Sigmoid colon (tissue), 7 donors: ENCODE measurements at regions of chr14 and their contacts with region 1.

Region 1: GRCh38 chr14:52043690-52044089 is 25.2 kb downstream of the NID2 start:
- DNase-seq: no peak
- H3K4me3 ChIP-seq: no peak overlapping the region
- H3K27ac ChIP-seq: peak overlapping the region in 1 of 4 donors; percentile 85
- H3K4me1 ChIP-seq: peaks cover 0 to 66% (median 62%) of the 10 kb centered on the region in 4 donors
- H3K27me3 ChIP-seq: no peaks in the 10 kb centered on the region
- CTCF ChIP-seq: peak in 1 of 4 experiments; percentile 21
- EP300 ChIP-seq: no peak
- POLR2A ChIP-seq: no peak

Region 2: DNA sequence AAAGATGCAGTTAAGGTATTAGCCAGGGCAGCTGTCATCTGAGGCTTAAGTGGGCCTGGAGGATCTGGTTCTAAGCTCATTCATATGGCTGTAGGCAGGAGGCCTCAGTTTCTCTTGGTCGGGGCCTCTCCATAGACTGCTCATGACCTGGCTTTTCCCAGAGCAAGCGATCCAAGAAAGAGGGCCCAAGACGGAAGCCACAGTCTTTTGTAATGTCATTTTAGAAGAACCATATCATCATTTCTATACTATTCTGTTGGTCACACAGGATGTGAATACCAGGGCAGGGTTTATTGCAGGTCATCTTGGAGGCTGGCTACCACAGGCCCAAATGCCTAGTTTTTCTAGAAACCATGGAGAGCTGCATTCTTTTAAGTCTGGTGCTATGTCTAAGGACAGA is 135.6 kb before region 1 on chr14:
- intact Hi-C with region 1: no loop called
- DNase-seq: no peak
- H3K4me3 ChIP-seq: no peak overlapping the region
- H3K27ac ChIP-seq: no peak overlapping the region
- H3K4me1 ChIP-seq: peaks cover 0 to 16% (median 6%) of the 10 kb centered on the region in 4 donors
- H3K27me3 ChIP-seq: no peaks in the 10 kb centered on the region
- CTCF ChIP-seq: no peak
- EP300 ChIP-seq: no peak
- POLR2A ChIP-seq: no peak

Region 3: GRCh38 chr14:52007637-52008036 is 36.1 kb before region 1 on chr14:
- intact Hi-C with region 1: loop called (anchors 5 kb)
- DNase-seq: no peak
- H3K4me3 ChIP-seq: no peak overlapping the region
- H3K27ac ChIP-seq: no peak overlapping the region
- H3K4me1 ChIP-seq: peaks cover 0 to 23% (median 18%) of the 10 kb centered on the region in 4 donors
- H3K27me3 ChIP-seq: no peaks in the 10 kb centered on the region
- CTCF ChIP-seq: no peak
- EP300 ChIP-seq: no peak
- POLR2A ChIP-seq: no peak

Region 4: DNA sequence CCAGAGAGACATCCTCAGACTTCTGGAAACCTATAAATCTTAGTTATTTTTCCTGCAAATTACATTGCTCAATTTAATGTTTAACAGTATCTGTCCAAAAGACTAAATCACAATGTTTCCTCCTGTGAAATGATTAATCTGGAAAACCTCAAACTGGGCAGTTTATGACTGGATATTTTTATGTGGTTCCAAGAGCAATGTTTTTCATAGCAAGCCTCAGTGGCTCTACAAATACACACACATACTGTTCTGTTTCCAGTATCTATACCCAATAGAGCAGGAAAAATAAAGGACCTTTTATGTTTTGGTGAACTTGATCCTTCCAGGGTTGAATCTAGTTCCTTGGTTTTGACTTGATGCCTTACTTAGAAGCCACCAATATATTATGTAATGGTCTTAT is 16.0 kb after region 1 on chr14:
- intact Hi-C with region 1: loop called (anchors 2 kb)
- DNase-seq: no peak
- H3K4me3 ChIP-seq: peak overlapping the region in 1 of 4 donors; percentile 10
- H3K27ac ChIP-seq: peak overlapping the region; percentile 62 to 80 (median 74)
- H3K4me1 ChIP-seq: peaks cover 0 to 76% (median 61%) of the 10 kb centered on the region in 4 donors
- H3K27me3 ChIP-seq: no peaks in the 10 kb centered on the region
- CTCF ChIP-seq: no peak
- EP300 ChIP-seq: peak in 2 of 4 donors; percentile 35 to 66
- POLR2A ChIP-seq: no peak

Region 5: GRCh38 chr14:52068615-52069303 is 25.1 kb after region 1 on chr14 and contains the start of gene NID2:
- intact Hi-C with region 1: loop called (anchors 2 kb)
- DNase-seq: peak; percentile 97
- H3K4me3 ChIP-seq: peak within 1 kb of the TSS; percentile 53 to 89 (median 84)
- H3K27ac ChIP-seq: peak within 1 kb of the TSS; percentile 89 to 93 (median 92)
- H3K4me1 ChIP-seq: peaks cover 0 to 36% (median 27%) of the 10 kb centered on the region in 4 donors
- H3K27me3 ChIP-seq: no peaks in the 10 kb centered on the region
- CTCF ChIP-seq: peak in 1 of 4 experiments; percentile 11
- EP300 ChIP-seq: no peak
- POLR2A ChIP-seq: peak; percentile 44 to 46
- total RNA-seq, gene NID2: 26.4 to 52.9 (median 29.9) TPM

Region 6: DNA sequence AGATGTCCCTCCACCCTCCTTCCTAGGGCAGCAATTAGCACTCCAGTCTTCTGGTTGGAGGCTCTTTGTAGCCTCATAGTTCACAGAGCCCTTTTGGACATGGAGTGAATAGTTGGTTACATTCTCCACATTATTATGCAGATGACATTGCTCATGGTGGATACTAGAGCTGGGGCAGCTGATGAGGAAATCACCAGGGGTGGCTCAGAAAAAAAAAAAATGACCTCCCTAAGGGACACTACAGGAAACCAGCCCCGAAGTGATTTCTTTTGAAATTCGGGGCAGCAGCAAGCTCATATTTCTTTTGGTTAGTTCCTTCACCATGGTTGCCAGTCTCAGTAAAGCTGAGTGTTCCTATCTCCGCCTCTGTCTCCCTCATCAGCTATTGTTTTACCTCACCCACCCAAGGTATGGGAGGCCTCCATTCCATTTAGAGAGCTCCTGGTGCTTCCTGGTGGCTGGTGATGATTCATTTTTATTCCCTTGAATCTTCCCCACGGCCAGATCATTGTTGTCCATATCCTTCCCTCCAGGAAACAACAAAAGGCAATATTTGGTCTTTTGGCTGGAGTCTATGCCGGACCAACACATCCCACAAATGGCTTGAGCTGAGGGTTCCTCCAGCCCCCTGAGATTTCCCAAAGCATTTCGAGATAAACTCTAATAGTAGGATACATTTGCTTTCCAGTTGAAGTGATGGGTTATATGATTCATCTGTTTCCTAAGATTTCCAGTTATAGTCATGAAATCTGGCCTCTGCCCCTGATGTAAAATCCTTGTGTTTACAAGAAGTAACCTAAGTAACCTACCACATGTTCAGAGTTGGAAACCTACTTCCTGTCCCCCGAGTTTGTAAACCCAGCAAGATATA is 81.3 kb after region 1 on chr14:
- intact Hi-C with region 1: loop called (anchors 5 kb)
- DNase-seq: no peak
- H3K4me3 ChIP-seq: no peak overlapping the region
- H3K27ac ChIP-seq: peak overlapping the region in 1 of 4 donors; percentile 36
- H3K4me1 ChIP-seq: peaks cover 0 to 21% (median 10%) of the 10 kb centered on the region in 4 donors
- H3K27me3 ChIP-seq: no peaks in the 10 kb centered on the region
- CTCF ChIP-seq: no peak
- EP300 ChIP-seq: no peak
- POLR2A ChIP-seq: no peak